Ovary (tissue), 10 donors: ENCODE measurements at regions of chr4 and their contacts with region 1.

Region 1: GRCh38 chr4:24594891-24595290 is 10.5 kb upstream of the DHX15 start:
- DNase-seq: no peak
- H3K4me3 ChIP-seq: no peak overlapping the region
- H3K27ac ChIP-seq: no peak overlapping the region
- H3K4me1 ChIP-seq: no peaks in the 10 kb centered on the region
- H3K27me3 ChIP-seq: no peaks in the 10 kb centered on the region
- CTCF ChIP-seq: no peak
- EP300 ChIP-seq: no peak
- POLR2A ChIP-seq: no peak

Region 2: DNA sequence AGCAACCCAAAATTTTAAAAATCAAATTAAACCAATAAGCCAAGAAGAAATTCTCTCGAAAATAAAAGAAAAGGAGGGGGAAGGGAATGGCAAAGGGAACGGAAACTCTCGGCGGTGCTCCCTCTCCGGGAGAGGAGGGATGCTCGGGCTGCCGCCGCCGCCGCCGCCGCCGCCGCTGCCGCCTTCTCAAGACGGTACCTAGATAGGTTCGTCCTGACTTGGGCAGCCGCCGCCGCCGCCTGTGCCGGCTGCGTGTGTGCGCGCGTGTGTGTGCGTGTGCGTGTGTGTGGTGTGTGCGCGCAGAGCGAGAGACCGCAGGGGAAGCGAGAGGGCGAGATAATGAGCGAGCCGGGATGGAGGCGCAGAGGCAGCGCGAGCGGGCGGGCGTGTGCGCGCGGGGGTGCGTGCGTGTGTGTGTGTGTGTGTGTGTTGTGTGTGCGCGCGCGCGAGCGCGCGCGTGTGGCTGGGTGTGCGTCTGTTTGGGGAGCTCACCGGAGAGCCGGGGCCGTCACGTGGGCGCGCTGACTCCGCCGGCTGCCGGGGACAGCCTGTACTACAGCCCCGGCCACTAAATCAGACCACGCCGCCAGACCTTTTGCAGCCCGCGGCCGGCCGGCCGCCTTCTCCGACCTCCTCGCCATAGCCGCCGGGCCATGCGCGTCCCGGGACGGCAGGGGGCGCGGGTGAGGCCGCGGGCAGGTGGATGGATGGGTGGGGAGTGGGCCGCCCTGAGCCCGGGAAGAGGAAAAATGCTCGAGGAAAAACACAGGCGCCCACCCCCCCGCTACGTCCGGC is 122.2 kb before region 1 on chr4:
- intact Hi-C with region 1: loop called in 1 of 4 experiments (anchors 5 kb)
- DNase-seq: peak; percentile 81 to 91 (median 85)
- H3K4me3 ChIP-seq: peak overlapping the region; percentile 57
- H3K27ac ChIP-seq: peak overlapping the region; percentile 12 to 39
- H3K4me1 ChIP-seq: peaks cover 5% of the 10 kb centered on the region
- H3K27me3 ChIP-seq: no peaks in the 10 kb centered on the region
- CTCF ChIP-seq: peak; percentile 14 to 70 (median 61)
- EP300 ChIP-seq: no peak
- POLR2A ChIP-seq: peak; percentile 12